K562 (cell line): ENCODE measurements at regions of chr13 and their contacts with region 1.

Region 1: GRCh38 chr13:98484289-98485219 is 92.4 kb downstream of the STK24 start:
- DNase-seq: peak; percentile 46 to 81 (median 58)
- ATAC-seq: peak; percentile 86
- H3K4me3 ChIP-seq: no peak overlapping the region
- H3K27ac ChIP-seq: peak overlapping the region; percentile 86; the same call in 2 of the 3 replicates
- H3K4me1 ChIP-seq: peaks cover 39 to 43% of the 10 kb centered on the region in 2 experiments; a peak in 4 of 5 replicates
- H3K27me3 ChIP-seq: no peaks in the 10 kb centered on the region
- CTCF ChIP-seq: no peak
- EP300 ChIP-seq: no peak
- POLR2A ChIP-seq: no peak
- RAD21 ChIP-seq: no peak

Region 2: DNA sequence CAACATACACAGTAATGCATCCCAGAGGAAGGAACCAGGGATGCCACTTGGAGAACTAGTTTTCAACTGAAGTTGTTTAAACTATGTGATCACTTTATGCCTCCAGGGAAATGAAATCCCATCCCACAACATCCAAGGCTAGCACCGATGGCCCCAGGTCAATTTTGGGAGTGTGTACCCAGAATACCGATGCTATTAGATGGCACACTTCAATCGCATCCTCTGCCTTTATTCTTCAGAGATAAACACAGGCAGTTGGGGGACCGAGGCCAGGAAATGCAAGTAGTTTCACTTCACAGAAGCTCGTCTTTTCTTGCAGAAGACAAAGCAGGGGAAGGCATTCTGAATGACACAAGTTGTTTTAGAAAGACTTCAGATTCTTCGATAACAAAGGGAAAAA is 78.5 kb after region 1 on chr13:
- CTCF ChIA-PET with region 1: no interaction called
- POLR2A ChIA-PET with region 1: no interaction called
- in situ Hi-C with region 1: loop called (anchors 5 kb)
- intact Hi-C with region 1: no loop called
- DNase-seq: no peak
- ATAC-seq: no peak
- H3K4me3 ChIP-seq: no peak overlapping the region
- H3K27ac ChIP-seq: no peak overlapping the region
- H3K4me1 ChIP-seq: peaks cover 0 to 12% of the 10 kb centered on the region in 2 experiments; a peak in 3 of 5 replicates
- H3K27me3 ChIP-seq: no peaks in the 10 kb centered on the region
- CTCF ChIP-seq: no peak
- EP300 ChIP-seq: no peak
- POLR2A ChIP-seq: no peak
- RAD21 ChIP-seq: no peak